ENCODE measurements at regions of chr16 and their contacts with region 1.

Region 1: DNA sequence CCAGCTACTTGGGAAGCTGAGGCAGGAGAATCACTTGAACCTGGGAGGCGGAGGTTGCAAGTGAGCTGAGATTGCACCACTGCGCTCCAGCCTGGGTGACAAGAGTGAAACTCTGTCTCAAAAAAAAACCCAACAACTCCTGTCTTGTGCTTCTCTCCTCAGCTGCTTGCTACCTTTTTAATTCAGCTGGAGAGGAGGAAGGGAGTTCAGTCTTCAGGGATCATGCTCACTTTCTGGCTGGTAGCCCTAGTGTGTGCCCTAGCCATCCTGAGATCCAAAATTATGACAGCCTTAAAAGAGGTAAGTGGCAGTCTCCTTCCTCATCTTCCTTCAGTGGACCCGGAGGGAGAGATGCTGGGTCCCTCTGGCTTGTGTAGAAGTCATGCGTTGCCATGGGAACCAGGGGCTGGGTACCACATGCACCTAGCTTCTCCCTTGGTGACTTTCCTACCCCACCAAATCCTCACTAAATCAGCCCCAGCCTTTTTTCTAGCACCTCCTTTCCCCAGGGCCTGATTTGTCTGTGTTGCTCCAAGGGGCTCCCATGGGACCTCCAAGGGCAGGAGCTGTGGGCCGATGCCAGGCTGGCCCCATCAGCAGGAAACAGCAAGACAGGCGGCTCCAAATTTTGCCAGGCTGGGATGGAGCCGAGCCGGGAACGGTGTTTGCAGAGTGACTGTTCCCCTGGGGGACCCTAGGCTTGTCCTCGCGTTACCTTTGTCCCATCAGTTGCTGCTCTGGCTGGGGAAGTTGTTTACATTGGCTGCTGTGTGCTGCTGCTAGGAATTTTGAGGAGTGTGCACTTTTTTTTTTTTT is 65.1 kb downstream of the ABCC1 start:
- DNase-seq: peak in 3 of 5 donors; percentile 26 to 84 (median 65)
- H3K4me3 ChIP-seq: no peak overlapping the region
- H3K27ac ChIP-seq: no peak overlapping the region
- H3K4me1 ChIP-seq: peaks cover 0 to 8% (median 6%) of the 10 kb centered on the region in 3 donors
- H3K27me3 ChIP-seq: no peaks in the 10 kb centered on the region
- CTCF ChIP-seq: no peak

Region 2: DNA sequence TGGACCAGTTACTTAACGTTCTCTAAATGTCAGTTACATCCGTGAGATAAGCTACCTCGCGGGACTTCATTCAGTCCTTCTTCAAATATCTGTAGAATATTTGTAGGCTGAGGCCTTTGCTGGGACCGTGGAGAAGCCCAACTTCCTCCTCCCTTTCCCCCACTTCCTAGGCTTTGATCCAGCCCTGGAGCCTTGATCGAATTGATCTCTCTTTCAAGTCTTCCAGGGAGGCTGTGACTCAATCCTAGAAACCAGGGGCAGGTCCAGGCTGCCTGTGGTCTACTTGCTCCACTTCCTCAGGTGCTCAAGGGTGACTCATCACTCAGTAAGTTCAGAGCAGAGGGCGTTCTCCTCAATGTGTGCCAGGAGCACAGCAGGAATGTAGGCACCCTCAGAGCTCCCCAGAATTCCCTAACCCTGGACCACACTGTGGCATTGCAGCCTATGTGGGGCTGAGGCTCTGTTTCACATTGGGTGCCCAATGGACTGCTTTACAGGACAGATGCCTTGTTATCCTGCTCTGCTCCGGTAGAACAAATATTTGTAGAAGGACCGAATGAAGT is 114.9 kb before region 1 on chr16:
- intact Hi-C with region 1: no loop called
- DNase-seq: peak in 1 of 5 donors; percentile 75
- H3K4me3 ChIP-seq: no peak overlapping the region
- H3K27ac ChIP-seq: no peak overlapping the region
- H3K4me1 ChIP-seq: peaks cover 0 to 4% (median 0%) of the 10 kb centered on the region in 3 donors
- H3K27me3 ChIP-seq: no peaks in the 10 kb centered on the region
- CTCF ChIP-seq: no peak

Region 3: GRCh38 chr16:16062023-16062932 is 47.7 kb after region 1 on chr16:
- intact Hi-C with region 1: loop called (anchors 10 kb)
- DNase-seq: no peak
- H3K4me3 ChIP-seq: no peak overlapping the region
- H3K27ac ChIP-seq: no peak overlapping the region
- H3K4me1 ChIP-seq: no peaks in the 10 kb centered on the region
- H3K27me3 ChIP-seq: no peaks in the 10 kb centered on the region
- CTCF ChIP-seq: no peak